MCF 10A (cell line): ENCODE measurements at regions of chr16 and their contacts with region 1.

Region 1: GRCh38 chr16:27268376-27269299 is at the start of gene NSMCE1:
- DNase-seq: peak; percentile 96
- H3K4me3 Mint-ChIP-seq: peak within 1 kb of the TSS; percentile 94
- H3K27ac Mint-ChIP-seq: peak within 1 kb of the TSS; percentile 99
- H3K4me1 Mint-ChIP-seq: peaks cover 27% of the 10 kb centered on the region
- H3K27me3 Mint-ChIP-seq: no peaks in the 10 kb centered on the region
- CTCF ChIP-seq: no peak
- total RNA-seq, gene NSMCE1: 106 and 119 TPM in 2 replicates

Region 2: DNA sequence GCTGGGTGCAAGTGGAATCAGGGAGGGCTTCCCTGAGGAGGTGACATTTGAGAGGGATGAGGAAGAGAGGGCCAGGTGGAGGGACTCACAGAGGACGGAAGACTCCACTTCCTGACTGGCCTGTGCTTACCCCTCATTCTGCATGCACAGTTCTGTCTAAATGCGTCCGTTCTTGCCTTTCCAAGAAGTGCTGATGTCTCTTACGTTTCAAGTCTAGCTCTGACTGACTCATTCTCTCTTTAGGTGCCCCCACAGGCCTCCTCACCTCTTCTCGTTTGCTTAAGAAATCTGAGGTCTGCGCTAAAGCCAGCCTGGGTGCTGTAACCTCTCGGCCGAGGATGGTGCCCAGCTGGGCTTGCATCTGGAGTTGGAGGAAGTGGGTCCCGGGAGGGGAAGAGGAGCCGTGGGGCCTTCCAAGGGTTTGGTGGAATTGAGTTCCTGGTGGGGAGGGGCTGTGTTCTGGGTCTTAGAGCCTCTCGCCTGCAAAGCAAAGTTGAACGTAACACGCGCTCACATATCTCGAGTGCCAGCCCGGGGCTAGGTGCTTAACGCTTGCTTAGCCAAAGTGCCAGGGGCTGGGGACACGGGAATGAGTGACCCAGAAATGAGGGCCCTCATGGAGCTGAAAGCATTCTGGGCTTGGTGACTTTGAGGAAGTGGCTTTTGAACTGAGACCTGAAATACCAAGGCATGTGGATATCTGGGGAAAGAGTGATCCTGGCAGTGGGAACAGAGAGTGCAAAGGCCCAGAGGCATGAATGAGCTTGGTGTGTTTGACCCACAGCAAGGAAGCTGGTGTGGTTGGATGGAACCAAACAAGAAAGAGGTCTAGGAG is 50.0 kb after region 1 on chr16:
- CTCF ChIA-PET with region 1: interaction called, 3 read pairs
- POLR2A ChIA-PET with region 1: interaction called, 47 read pairs
- intact Hi-C with region 1: loop called (anchors 2 kb)
- DNase-seq: peak; percentile 90
- H3K4me3 Mint-ChIP-seq: peak overlapping the region; percentile 67
- H3K27ac Mint-ChIP-seq: peak overlapping the region; percentile 61
- H3K4me1 Mint-ChIP-seq: peaks cover 66% of the 10 kb centered on the region
- H3K27me3 Mint-ChIP-seq: no peaks in the 10 kb centered on the region
- CTCF ChIP-seq: no peak